Kidney (tissue), 22 donors: ENCODE measurements at regions of chr9 and their contacts with region 1.

Region 1: GRCh38 chr9:135347096-135347860 is 132.3 kb upstream of the PPP1R26 start:
- DNase-seq: peak in 1 of 5 donors; percentile 46
- H3K4me3 ChIP-seq: no peak overlapping the region
- H3K27ac ChIP-seq: no peak overlapping the region
- H3K4me1 ChIP-seq: no peaks in the 10 kb centered on the region
- H3K27me3 ChIP-seq: no peaks in the 10 kb centered on the region
- CTCF ChIP-seq: no peak

Region 2: GRCh38 chr9:135085830-135086546 is 261.3 kb before region 1 on chr9:
- intact Hi-C with region 1: loop called (anchors 5 kb)
- DNase-seq: peak; percentile 88 to 93 (median 90)
- H3K4me3 ChIP-seq: peak overlapping the region in 1 of 3 donors; percentile 31
- H3K27ac ChIP-seq: no peak overlapping the region
- H3K4me1 ChIP-seq: peaks cover 0 to 4% (median 0%) of the 10 kb centered on the region in 3 donors
- H3K27me3 ChIP-seq: peaks cover 18% of the 10 kb centered on the region
- CTCF ChIP-seq: peak; percentile 87